ENCODE measurements at regions of chr10 and their contacts with region 1.

Region 1: DNA sequence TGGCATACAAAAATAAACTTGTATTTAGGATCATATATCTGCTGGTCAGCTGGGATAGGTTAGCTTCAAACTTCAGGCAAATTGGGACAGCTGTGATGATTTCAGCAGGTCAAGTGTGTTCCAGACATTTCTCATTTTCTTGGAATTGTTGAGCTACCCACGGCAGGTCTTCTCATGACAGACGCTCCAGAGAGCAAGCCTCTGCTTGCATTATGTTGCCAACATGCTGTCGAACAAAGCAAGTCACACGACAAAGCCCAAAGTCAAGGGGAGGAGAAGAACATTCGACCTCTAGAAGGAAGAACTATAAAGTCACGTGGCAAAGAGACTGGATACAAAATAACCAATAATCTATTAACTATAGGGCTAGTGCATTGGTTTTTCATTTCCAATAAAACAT is 103.5 kb downstream of the RAB18 start:
- DNase-seq: no peak
- ATAC-seq: no peak
- H3K4me3 ChIP-seq: no peak overlapping the region
- H3K27ac ChIP-seq: no peak overlapping the region
- H3K4me1 ChIP-seq: 0 out of 2 replicates have a peak, but pooled peaks cover 2% of the 10 kb centered on the region
- H3K27me3 ChIP-seq: peaks cover 2% of the 10 kb centered on the region
- CTCF ChIP-seq: no peak
- POLR2A ChIP-seq: no peak
- RAD21 ChIP-seq: no peak

Region 2: GRCh38 chr10:27138277-27138676 is 469.3 kb before region 1 on chr10:
- CTCF ChIA-PET with region 1: no interaction called
- POLR2A ChIA-PET with region 1: no interaction called
- dilution Hi-C with region 1: no loop called
- in situ Hi-C with region 1: no loop called
- intact Hi-C with region 1: no loop called
- DNase-seq: no peak
- ATAC-seq: no peak
- H3K4me3 ChIP-seq: no peak overlapping the region
- H3K27ac ChIP-seq: no peak overlapping the region
- H3K4me1 ChIP-seq: no peaks in the 10 kb centered on the region
- H3K27me3 ChIP-seq: no peaks in the 10 kb centered on the region
- CTCF ChIP-seq: no peak
- POLR2A ChIP-seq: no peak
- RAD21 ChIP-seq: no peak

Region 3: DNA sequence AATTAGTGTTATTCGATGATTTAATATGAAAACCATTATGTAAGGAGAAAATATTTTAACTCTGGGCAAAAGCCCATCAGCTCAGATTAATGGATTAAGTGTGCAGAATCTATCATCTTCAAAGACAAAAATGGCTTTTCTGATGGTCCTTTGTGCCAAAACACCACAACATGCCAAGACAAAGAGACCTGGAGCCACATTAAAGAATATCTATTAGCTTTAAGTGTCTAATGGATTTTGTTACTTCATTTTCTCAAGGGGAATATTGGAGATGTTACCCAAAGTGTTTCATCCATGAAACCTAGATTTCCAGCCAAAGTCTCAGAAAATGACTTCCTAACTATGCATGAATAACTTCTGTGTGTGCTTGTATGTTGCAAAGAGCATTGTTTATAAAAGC is 80.7 kb after region 1 on chr10:
- CTCF ChIA-PET with region 1: interaction called, 10 read pairs
- POLR2A ChIA-PET with region 1: no interaction called
- dilution Hi-C with region 1: no loop called
- in situ Hi-C with region 1: no loop called
- intact Hi-C with region 1: no loop called
- DNase-seq: no peak
- ATAC-seq: no peak
- H3K4me3 ChIP-seq: no peak overlapping the region
- H3K27ac ChIP-seq: no peak overlapping the region
- H3K4me1 ChIP-seq: peaks cover 3% of the 10 kb centered on the region
- H3K27me3 ChIP-seq: no peaks in the 10 kb centered on the region
- CTCF ChIP-seq: no peak
- POLR2A ChIP-seq: no peak
- RAD21 ChIP-seq: no peak